IMR-90 (cell line): ENCODE measurements at regions of chr14 and their contacts with region 1.

Region 1: DNA sequence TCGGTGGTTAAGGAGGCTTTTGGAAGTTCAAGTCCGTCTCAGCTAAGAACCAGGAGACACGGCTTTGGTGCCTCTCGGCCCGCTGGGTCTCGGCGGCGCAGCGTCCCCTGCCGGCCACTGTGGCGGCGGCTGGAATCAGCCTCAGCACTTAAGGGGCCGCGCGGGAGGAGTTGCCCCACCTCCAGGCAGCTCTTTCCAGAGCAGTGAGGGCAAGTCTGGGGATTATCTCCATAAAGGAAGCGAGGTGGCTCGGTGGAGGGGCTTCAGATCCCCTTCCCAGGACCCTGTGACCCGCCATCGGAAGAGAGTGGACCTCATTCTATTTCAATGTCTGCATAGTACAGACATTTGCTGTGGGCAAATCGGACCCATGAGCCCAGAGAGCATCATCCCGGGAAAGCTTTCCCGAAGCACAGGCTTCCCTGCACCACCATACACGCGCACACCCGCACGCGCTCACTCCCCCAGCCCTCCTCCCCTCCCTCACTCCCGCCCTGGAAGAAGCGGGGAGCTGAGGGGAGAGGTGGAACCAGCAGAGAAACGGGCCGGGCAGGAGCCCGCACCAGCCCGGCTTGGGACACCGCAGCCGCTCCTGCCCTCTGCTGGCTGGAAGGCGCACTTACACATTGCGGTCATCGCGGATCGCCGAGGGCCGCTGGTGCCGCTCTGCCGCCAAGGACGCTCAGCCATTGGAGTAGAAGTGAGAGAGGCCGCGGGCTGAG is 15.9 kb downstream of the RNASE2 start:
- DNase-seq: peak; percentile 78
- ATAC-seq: peak; percentile 97
- H3K4me3 ChIP-seq: peak overlapping the region; percentile 57
- H3K27ac ChIP-seq: peak overlapping the region; percentile 33
- H3K4me1 ChIP-seq: peaks cover 5% of the 10 kb centered on the region; the same call in 1 of the 2 replicates
- H3K27me3 ChIP-seq: peaks cover 11% of the 10 kb centered on the region
- CTCF ChIP-seq: peak; percentile 97
- POLR2A ChIP-seq: no peak
- RAD21 ChIP-seq: peak; percentile 61

Region 2: DNA sequence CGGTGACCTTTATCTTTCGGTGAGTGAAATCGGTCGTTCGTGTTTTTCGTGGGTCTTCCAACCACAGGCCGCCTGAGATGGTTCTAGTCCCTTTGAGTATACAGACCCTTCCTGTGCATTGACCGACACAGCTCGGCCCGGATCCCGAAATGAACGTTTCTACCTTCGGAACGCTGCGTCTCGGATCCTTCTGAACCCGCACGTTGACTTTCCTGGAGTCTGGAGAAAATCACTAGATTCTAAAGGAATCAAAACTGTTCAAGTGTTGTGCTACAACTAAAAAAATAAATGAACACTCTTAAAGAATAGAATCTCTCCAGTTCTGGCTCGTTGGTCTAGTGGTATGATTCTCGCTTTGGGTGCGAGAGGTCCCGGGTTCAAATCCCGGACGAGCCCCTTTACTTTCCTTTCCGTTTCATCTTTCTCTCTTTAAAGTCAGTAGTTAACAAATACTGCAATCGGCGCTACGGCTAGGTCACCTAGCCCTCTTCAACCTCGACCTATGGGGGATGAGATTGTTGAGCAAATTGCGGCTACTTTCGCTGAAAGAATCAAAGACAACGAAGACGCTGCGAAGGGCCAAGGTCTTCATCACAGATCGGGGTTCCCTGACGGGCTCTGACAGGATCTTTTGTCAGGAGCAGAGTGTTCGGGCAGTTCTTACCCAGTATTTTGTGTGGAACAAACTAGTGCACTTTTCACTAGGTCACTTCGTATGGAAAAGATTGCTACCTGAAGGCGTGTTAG is 338.3 kb before region 1 on chr14:
- CTCF ChIA-PET with region 1: no interaction called
- POLR2A ChIA-PET with region 1: no interaction called
- dilution Hi-C with region 1: no loop called
- in situ Hi-C with region 1: no loop called
- intact Hi-C with region 1: loop called (anchors 5 kb)
- DNase-seq: peak; percentile 85
- ATAC-seq: peak; percentile 82
- H3K4me3 ChIP-seq: peak overlapping the region; percentile 33; the same call in 1 of the 2 replicates
- H3K27ac ChIP-seq: no peak overlapping the region
- H3K4me1 ChIP-seq: no peaks in the 10 kb centered on the region
- H3K27me3 ChIP-seq: peaks cover 4% of the 10 kb centered on the region
- CTCF ChIP-seq: no peak
- POLR2A ChIP-seq: no peak
- RAD21 ChIP-seq: no peak

Region 3: DNA sequence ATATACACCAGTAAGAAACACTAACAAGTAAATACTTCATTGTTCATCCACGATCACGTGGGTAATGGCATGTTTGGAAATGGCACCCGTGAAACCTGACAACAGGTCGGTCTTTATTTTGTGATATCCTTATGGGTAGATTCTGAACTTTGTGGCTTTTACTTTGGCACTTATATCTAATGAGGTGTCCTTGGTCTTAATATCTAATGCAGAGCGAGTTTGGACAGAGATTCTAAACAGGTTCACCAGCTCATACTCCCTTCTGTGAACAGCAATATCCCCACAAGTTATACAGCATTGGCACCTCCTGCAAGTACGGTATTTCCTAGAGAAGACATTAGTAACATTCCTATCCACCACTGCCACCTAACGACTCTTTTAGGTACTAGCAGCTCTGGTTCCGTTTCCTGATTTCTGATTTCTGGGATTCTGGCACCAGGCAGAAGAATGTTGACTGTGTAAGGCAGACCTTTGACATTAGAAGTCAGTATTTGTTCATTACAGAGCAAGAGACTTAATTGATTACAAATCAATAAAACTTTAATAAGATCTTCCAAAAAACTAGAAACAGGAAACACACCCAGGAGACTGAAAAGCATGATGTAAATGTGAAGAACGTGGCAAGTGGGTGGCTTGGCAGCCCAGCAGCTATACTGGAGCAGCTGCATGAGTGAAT is 280.2 kb before region 1 on chr14:
- CTCF ChIA-PET with region 1: no interaction called
- POLR2A ChIA-PET with region 1: no interaction called
- dilution Hi-C with region 1: no loop called
- in situ Hi-C with region 1: loop called (anchors 10 kb)
- intact Hi-C with region 1: no loop called
- DNase-seq: peak; percentile 72
- ATAC-seq: peak; percentile 99
- H3K4me3 ChIP-seq: no peak overlapping the region; the same call in 1 of the 2 replicates
- H3K27ac ChIP-seq: no peak overlapping the region
- H3K4me1 ChIP-seq: no peaks in the 10 kb centered on the region
- H3K27me3 ChIP-seq: no peaks in the 10 kb centered on the region
- CTCF ChIP-seq: peak; percentile 88
- POLR2A ChIP-seq: no peak
- RAD21 ChIP-seq: peak; percentile 82

Region 4: GRCh38 chr14:20855652-20856291 is 115.4 kb before region 1 on chr14:
- CTCF ChIA-PET with region 1: interaction called, 27 read pairs
- POLR2A ChIA-PET with region 1: no interaction called
- dilution Hi-C with region 1: no loop called
- in situ Hi-C with region 1: no loop called
- intact Hi-C with region 1: loop called (anchors 1 kb)
- DNase-seq: peak; percentile 59
- ATAC-seq: peak; percentile 89
- H3K4me3 ChIP-seq: no peak overlapping the region
- H3K27ac ChIP-seq: no peak overlapping the region
- H3K4me1 ChIP-seq: no peaks in the 10 kb centered on the region
- H3K27me3 ChIP-seq: peaks cover 2% of the 10 kb centered on the region; the same call in 1 of the 2 replicates
- CTCF ChIP-seq: peak; percentile 61
- POLR2A ChIP-seq: no peak
- RAD21 ChIP-seq: peak; percentile 63

Region 5: GRCh38 chr14:21039585-21040369 is 68.6 kb after region 1 on chr14:
- CTCF ChIA-PET with region 1: no interaction called
- POLR2A ChIA-PET with region 1: no interaction called
- dilution Hi-C with region 1: no loop called
- in situ Hi-C with region 1: no loop called
- intact Hi-C with region 1: loop called (anchors 2 kb)
- DNase-seq: peak; percentile 67
- ATAC-seq: peak; percentile 81
- H3K4me3 ChIP-seq: no peak overlapping the region
- H3K27ac ChIP-seq: no peak overlapping the region
- H3K4me1 ChIP-seq: peaks cover 2% of the 10 kb centered on the region; the same call in 1 of the 2 replicates
- H3K27me3 ChIP-seq: peaks cover 36% of the 10 kb centered on the region
- CTCF ChIP-seq: peak; percentile 68
- POLR2A ChIP-seq: no peak
- RAD21 ChIP-seq: peak; percentile 70

Region 6: DNA sequence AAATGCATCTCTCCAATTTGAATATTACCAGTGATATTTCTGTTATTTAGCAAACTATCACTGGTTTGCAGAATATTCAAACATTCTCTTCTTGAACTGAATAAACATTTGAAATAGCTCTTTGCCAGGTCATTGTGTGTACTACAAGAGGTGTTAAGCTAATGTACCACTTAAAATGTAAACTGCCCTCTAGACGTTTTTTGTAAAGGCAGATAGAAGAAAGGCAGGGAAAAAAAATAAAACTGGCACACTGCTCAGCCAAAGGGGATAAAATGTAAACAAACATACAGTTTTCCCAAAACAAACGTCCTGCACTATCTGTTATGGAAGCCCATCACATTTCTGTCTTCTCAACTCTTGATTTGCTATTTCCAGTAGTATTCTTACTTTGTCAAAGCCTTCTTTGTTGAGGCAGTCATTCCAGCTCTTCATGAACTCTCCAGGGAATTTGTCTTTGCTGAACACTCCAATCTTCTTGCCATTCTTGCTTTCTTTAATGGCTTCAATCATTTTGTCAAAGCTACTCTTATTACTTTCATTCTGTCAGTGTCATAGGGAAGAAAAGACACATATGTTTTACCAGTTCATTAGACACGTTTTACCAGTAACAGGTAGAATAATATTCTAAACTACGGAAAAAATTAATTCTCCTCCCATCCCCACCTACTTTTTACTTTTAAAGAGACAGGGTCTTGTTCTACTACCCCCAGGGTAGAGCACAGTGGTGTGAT is 399.0 kb after region 1 on chr14:
- CTCF ChIA-PET with region 1: no interaction called
- POLR2A ChIA-PET with region 1: no interaction called
- dilution Hi-C with region 1: no loop called
- in situ Hi-C with region 1: no loop called
- intact Hi-C with region 1: no loop called
- DNase-seq: no peak
- ATAC-seq: no peak; the same call in 1 of the 2 replicates
- H3K4me3 ChIP-seq: no peak overlapping the region
- H3K27ac ChIP-seq: no peak overlapping the region
- H3K4me1 ChIP-seq: no peaks in the 10 kb centered on the region
- H3K27me3 ChIP-seq: no peaks in the 10 kb centered on the region
- CTCF ChIP-seq: no peak
- POLR2A ChIP-seq: no peak
- RAD21 ChIP-seq: no peak